Activated CD4-positive, alpha-beta memory T cell treated with anti-CD3 and anti-CD28 coated beads for 36 hours (primary cell): ENCODE measurements at regions of chr13 and their contacts with region 1.

Region 1: DNA sequence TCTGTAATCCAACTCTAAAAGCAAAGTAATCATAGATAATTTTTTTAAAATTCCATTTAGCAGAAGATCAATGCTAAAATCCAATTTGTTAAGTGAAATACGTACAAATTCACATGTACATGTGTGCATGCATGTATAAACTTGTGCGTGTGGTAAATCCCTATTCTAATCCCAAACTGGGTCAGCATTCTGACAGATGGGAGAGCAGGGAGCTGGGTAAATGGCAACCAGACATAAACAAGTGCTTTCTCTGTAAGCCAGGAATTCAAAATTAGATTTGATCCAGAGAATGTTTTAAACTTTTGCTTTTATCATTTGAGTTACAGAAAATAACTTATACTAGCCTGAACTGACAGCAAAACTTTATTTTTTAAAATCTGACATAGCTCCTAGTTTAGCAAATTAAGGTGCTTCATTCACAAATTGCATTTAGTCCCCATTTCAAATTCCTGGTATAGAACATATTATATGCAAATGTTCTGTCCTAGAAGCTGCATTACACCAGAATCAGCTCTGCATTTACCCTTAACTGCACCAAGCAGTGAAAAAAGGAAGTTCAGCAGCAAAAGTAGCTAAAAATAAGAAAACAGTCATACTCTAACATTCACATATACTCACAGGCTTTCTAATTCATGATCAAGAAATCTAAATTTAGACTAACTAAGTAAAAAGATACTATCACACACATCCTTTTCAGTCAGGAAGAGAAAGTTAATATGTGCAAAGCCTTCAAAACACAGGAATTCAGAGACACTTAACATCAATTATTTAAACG is 32.6 kb downstream of the UBL3 start:
- DNase-seq: no peak
- H3K4me3 Mint-ChIP-seq: no peak overlapping the region
- H3K27ac Mint-ChIP-seq: peak overlapping the region; percentile 59
- H3K4me1 Mint-ChIP-seq: peaks cover 55% of the 10 kb centered on the region
- H3K27me3 Mint-ChIP-seq: no peaks in the 10 kb centered on the region

Region 2: DNA sequence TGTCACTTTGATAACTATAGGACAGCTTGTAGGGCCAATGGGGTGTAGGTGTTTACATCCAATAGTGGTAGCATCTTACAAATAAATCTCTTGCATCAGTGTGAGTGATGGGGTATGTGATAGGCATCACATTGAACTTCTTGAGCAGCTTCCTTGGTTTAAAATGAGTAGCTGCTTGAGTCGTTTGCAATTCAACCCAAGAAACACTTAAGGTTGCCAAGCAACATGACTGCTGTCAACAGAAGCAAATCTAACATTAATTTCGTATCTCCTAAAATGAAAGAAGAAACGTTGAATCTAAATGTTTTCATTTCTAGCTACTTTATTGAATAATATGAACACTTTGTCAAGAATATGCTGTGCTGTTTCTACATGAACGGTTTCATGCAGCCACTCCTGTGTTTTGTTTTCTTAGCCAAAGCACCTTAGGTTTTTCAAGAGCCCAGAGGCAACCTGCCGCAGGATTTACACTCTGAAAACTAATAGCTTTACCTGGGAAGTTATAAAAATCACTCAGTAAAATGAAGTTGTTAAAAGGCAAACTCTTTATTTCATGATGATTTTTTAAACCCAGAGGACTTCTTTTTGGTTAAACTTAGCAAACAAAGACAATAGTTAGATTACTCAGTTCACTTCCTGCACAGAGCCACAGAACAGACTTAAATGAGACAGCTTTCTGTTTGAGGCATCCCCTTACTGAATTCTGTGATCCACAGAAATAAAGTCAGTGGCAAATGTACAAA is 692.4 kb before region 1 on chr13:
- CTCF ChIA-PET with region 1: no interaction called
- POLR2A ChIA-PET with region 1: no interaction called
- intact Hi-C with region 1: loop called (anchors 5 kb)
- DNase-seq: no peak
- H3K4me3 Mint-ChIP-seq: peak overlapping the region; percentile 21
- H3K27ac Mint-ChIP-seq: peak overlapping the region; percentile 80
- H3K4me1 Mint-ChIP-seq: peaks cover 19% of the 10 kb centered on the region
- H3K27me3 Mint-ChIP-seq: no peaks in the 10 kb centered on the region

Region 3: GRCh38 chr13:29799051-29799450 is 18.7 kb before region 1 on chr13:
- CTCF ChIA-PET with region 1: no interaction called
- POLR2A ChIA-PET with region 1: no interaction called
- intact Hi-C with region 1: no loop called
- DNase-seq: no peak
- H3K4me3 Mint-ChIP-seq: no peak overlapping the region
- H3K27ac Mint-ChIP-seq: no peak overlapping the region
- H3K4me1 Mint-ChIP-seq: peaks cover 41% of the 10 kb centered on the region
- H3K27me3 Mint-ChIP-seq: no peaks in the 10 kb centered on the region

Region 4: DNA sequence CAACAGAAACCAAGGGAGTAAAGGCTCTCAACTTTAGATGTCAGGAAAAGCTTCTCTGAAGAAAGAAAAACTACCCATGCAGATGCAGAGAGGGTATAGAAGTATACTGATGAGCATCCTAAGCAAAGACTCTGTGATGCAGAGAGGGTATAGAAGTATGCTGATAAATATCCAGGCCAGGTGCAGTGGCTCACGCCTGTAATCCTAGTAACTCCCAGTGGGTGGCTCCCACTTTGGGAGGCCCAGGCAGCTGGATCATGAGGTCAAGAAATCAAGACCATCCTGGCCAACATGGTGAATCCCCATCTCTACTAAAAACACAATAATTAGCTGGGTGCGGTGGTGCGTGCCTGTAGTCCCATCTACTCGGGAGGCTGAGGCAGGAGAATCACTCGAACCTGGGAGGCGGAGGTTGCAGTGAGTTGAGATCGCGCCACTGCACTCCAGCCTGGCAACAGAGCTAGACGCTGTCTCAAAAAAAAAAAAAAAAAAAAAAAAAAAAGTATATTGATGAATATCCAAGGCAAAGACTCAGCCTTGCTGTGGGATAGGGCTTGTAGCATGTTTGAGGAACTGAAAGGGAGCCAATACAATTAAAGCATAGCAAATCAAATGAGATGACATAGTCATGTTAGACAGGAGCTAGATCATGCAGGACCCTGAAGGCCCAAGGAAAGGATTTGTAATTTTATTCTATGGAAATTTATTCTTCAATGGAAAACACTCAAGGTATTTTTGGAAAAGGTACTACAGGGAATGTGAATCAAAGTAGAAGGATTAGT is 17.7 kb after region 1 on chr13:
- CTCF ChIA-PET with region 1: interaction called, 3 read pairs
- POLR2A ChIA-PET with region 1: no interaction called
- intact Hi-C with region 1: loop called (anchors 1 kb)
- DNase-seq: no peak
- H3K4me3 Mint-ChIP-seq: no peak overlapping the region
- H3K27ac Mint-ChIP-seq: no peak overlapping the region
- H3K4me1 Mint-ChIP-seq: peaks cover 61% of the 10 kb centered on the region
- H3K27me3 Mint-ChIP-seq: no peaks in the 10 kb centered on the region